Gastrocnemius medialis (tissue), 4 donors: ENCODE measurements at regions of chr19 and their contacts with region 1.

Region 1: GRCh38 chr19:55385740-55386529 is at the start of gene RPL28:
- DNase-seq: peak; percentile 98
- ATAC-seq: peak; percentile 80 to 89
- H3K4me3 ChIP-seq: peak within 1 kb of the TSS; percentile 84 to 96 (median 88)
- H3K27ac ChIP-seq: peak within 1 kb of the TSS; percentile 90 to 98 (median 93)
- H3K4me1 ChIP-seq: peaks cover 25 to 40% of the 10 kb centered on the region in 2 donors
- H3K27me3 ChIP-seq: no peaks in the 10 kb centered on the region
- CTCF ChIP-seq: no peak
- POLR2A ChIP-seq: peak; percentile 95 to 97
- total RNA-seq, gene RPL28: 123 to 278 (median 206) TPM

Region 2: DNA sequence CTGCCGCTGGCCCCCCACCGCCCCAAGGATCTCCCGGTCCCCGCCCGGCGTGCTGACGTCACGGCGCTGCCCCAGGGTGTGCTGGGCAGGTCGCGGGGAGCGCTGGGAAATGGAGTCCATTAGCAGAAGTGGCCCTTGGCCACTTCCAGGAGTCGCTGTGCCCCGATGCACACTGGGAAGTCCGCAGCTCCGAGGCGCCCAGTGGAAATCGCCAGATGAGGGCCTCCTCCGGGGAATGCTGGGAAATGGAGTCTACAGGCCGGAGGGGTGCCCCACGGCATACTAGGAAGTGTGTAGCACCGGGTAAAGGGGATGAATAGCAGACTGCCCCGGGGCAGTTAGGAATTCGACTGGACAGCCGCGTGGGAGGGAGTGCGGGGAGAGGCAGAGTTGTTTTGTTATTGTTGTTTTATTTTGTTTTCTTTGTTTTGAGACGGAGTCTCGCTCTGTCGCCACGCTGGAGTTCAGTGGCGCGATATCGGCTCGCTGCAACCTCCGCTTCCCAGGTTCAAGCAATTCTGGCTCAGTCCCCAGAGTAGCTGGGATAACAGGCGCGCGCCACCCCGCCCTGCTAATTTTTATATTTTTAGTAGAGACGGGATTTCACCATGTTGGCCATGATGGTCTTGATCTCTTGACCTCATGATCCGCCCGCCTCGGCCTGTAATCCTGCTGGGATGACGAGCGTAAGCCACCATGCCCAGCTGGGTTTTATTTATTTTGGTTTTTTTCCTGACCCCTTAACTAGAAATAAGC is 268.1 kb before region 1 on chr19 and contains the start of gene PPP1R12C:
- in situ Hi-C with region 1: no loop called
- intact Hi-C with region 1: loop called (anchors 10 kb)
- DNase-seq: peak; percentile 98
- ATAC-seq: peak; percentile 81 to 90
- H3K4me3 ChIP-seq: peak within 1 kb of the TSS; percentile 80 to 90 (median 85)
- H3K27ac ChIP-seq: peak within 1 kb of the TSS; percentile 74 to 88 (median 86)
- H3K4me1 ChIP-seq: peaks cover 35 to 44% of the 10 kb centered on the region in 2 donors
- H3K27me3 ChIP-seq: no peaks in the 10 kb centered on the region
- CTCF ChIP-seq: peak in 1 of 5 experiments; percentile 25
- POLR2A ChIP-seq: peak; percentile 29 to 36
- total RNA-seq, gene PPP1R12C: 22.6 to 28.2 (median 26.2) TPM

Region 3: GRCh38 chr19:55301459-55302317 is 84.2 kb before region 1 on chr19:
- in situ Hi-C with region 1: no loop called
- intact Hi-C with region 1: loop called (anchors 2 kb)
- DNase-seq: peak; percentile 53 to 72
- ATAC-seq: peak; percentile 79 to 80
- H3K4me3 ChIP-seq: peak overlapping the region; percentile 49 to 57 (median 52)
- H3K27ac ChIP-seq: no peak overlapping the region
- H3K4me1 ChIP-seq: peaks cover 0 to 4% of the 10 kb centered on the region in 2 donors
- H3K27me3 ChIP-seq: no peaks in the 10 kb centered on the region
- CTCF ChIP-seq: peak; percentile 69 to 97 (median 94)
- POLR2A ChIP-seq: no peak

Region 4: DNA sequence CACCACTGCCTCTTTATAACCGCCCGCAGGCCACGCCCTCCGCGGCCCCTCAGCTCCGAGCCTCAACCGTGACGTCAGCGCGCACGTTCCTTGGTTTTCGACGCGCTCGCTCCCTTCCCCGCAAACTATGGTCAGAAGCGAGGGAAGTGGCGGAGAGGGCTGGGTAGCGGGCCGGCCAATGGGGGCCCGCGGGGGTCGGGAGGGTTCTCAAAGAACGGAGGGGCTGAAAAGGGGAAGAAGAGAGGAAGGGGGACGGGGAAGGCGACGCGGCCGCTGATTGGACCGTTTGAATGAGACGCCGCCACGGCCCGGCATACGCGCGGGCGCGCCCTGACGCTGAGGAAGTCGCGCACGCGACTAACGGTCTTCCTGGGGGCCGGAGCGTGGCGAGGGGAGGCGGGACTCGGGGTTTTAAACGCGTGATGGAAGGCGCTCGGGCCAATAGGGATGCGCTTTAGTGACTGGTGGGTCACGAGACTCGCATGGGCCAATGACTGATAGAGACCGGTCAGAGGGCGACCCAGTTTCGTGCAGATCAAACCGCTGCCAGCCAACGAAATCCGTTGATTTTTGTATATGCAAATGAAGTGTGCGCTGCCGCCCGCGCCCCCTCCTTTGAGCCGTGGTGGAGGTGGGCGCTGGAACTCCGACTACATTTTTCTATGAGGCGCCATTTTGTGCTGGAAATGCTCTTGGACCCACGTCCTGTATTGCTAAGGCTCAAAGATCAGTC is 22.0 kb after region 1 on chr19:
- in situ Hi-C with region 1: no loop called
- intact Hi-C with region 1: loop called (anchors 2 kb)
- DNase-seq: peak; percentile 96 to 97
- ATAC-seq: peak; percentile 96 to 98
- H3K4me3 ChIP-seq: peak overlapping the region; percentile 68 to 85 (median 70)
- H3K27ac ChIP-seq: peak overlapping the region; percentile 91 to 97 (median 93)
- H3K4me1 ChIP-seq: peaks cover 0 to 15% of the 10 kb centered on the region in 2 donors
- H3K27me3 ChIP-seq: no peaks in the 10 kb centered on the region
- CTCF ChIP-seq: no peak
- POLR2A ChIP-seq: no peak

Region 5: GRCh38 chr19:55476100-55476775 is 90.3 kb after region 1 on chr19 and contains the start of gene ZNF628:
- in situ Hi-C with region 1: no loop called
- intact Hi-C with region 1: loop called (anchors 5 kb)
- DNase-seq: peak; percentile 98
- ATAC-seq: peak; percentile 93 to 95
- H3K4me3 ChIP-seq: peak within 1 kb of the TSS; percentile 59 to 90 (median 70)
- H3K27ac ChIP-seq: peak within 1 kb of the TSS; percentile 92 to 97 (median 96)
- H3K4me1 ChIP-seq: peaks cover 16 to 25% of the 10 kb centered on the region in 2 donors
- H3K27me3 ChIP-seq: peaks cover 0 to 3% (median 0%) of the 10 kb centered on the region in 3 donors
- CTCF ChIP-seq: no peak
- POLR2A ChIP-seq: peak; percentile 82 to 85
- total RNA-seq, gene ZNF628: 7.4 to 22.3 (median 14.1) TPM